ENCODE measurements at regions of chr11 and their contacts with region 1.

Region 1: GRCh38 chr11:34313099-34313517 is 44.7 kb downstream of the ABTB2 start:
- DNase-seq: no peak
- H3K4me3 ChIP-seq: no peak overlapping the region
- H3K27ac ChIP-seq: no peak overlapping the region
- H3K4me1 ChIP-seq: no peaks in the 10 kb centered on the region
- H3K27me3 ChIP-seq: no peaks in the 10 kb centered on the region
- CTCF ChIP-seq: no peak
- POLR2A ChIP-seq: no peak

Region 2: DNA sequence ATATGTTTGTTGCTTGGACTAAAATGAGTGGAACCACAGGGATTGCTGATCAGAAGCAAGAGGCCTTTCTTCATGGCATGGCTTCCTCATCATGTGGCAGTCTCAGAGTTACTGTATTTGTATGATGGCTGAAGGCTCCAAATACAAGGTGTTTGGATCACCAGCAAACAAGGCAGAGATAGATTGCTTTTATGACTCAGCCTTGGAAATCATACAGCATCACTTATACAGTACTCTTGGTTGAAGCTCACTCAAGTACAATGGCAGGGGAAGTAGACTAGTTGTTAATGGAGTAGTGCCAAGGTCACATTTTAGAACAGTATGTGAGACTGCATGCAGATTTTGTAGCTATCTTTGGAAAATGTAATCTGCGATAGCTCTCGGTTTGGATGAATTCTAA is 245.0 kb before region 1 on chr11:
- intact Hi-C with region 1: no loop called
- DNase-seq: no peak
- H3K4me3 ChIP-seq: no peak overlapping the region
- H3K27ac ChIP-seq: no peak overlapping the region
- H3K4me1 ChIP-seq: peaks cover 6% of the 10 kb centered on the region
- H3K27me3 ChIP-seq: no peaks in the 10 kb centered on the region
- CTCF ChIP-seq: no peak
- POLR2A ChIP-seq: no peak

Region 3: DNA sequence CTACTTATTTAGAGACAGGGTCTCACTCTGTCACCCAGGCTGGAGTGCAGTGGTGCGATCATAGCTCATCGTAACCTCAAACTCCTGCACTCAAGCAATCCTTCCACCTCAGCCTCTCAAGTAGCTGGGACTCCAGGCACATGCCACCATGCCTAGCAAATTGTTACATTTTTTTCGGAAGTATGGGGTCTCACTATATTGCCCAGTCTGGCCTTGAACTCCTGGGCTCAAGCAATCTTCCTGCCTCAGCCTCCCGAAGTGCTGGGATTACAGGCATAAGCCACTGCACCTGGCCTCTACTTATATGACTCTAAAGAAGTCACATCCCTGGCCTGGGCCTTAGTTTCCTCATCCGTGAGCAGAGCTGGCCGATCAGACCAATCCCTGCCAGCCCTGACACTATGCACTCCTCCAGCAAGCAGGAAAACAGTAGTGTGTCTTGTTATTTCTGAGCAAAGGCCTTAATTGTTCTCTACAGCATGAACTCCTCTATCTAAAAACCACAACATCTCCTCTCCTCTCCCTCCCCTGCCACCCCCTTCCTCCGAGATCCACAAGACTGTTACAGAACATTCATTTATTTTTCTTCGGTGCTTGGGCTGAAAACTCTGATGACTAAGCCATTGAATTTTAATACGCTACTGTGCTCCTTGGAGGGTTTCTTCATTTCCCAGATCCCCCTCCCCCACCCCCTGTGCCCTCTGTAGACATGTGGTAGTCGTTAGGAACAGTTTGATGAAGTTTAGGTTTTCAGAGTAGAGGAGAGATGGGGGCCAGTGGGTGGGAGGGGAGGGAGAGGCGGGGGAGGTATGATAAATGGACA is 46.8 kb before region 1 on chr11:
- intact Hi-C with region 1: loop called (anchors 5 kb)
- DNase-seq: no peak
- H3K4me3 ChIP-seq: no peak overlapping the region
- H3K27ac ChIP-seq: no peak overlapping the region
- H3K4me1 ChIP-seq: no peaks in the 10 kb centered on the region
- H3K27me3 ChIP-seq: no peaks in the 10 kb centered on the region
- CTCF ChIP-seq: no peak
- POLR2A ChIP-seq: no peak

Region 4: DNA sequence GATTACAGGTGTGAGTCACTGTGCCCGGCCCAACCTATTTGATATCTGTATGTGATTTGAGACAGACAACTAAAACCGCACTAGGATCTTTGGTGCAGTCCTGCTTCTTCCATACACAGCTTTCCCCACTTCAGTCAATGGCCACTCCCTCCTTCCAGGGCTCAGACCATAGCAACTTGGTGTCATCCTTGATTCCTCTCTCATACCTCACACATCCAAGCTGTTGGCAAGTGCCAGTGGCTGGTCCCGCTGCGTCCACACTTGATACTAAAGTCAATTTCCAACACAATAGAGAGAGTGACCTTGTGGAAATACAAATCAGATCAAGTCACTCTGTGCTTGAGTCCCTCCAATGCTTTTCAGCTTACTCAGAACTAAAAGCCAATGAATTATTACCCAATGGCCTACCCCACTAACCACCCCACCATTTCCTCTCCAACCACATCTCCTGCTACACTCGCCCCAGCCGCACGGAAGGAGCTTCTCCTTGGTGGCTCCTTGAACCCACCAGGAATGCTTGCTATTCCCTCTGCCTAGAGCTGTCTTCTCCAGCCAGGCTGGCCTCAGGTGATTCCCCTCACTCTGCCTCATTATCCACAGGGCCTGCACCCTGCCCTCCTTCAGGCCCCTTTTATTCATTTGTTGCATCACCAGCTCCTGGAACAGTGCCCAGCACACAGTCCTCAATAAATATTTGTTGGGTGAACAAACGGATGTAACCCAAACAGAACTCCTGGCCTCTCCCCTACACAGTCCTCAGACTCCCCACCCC is 31.8 kb after region 1 on chr11:
- intact Hi-C with region 1: loop called (anchors 5 kb)
- DNase-seq: peak; percentile 36
- H3K4me3 ChIP-seq: no peak overlapping the region
- H3K27ac ChIP-seq: peak overlapping the region in 1 of 2 donors; percentile 14
- H3K4me1 ChIP-seq: no peaks in the 10 kb centered on the region
- H3K27me3 ChIP-seq: no peaks in the 10 kb centered on the region
- CTCF ChIP-seq: no peak
- POLR2A ChIP-seq: no peak

Region 5: GRCh38 chr11:34417202-34417601 is 104.1 kb after region 1 on chr11:
- intact Hi-C with region 1: no loop called
- DNase-seq: no peak
- H3K4me3 ChIP-seq: no peak overlapping the region
- H3K27ac ChIP-seq: no peak overlapping the region
- H3K4me1 ChIP-seq: peaks cover 3% of the 10 kb centered on the region
- H3K27me3 ChIP-seq: no peaks in the 10 kb centered on the region
- CTCF ChIP-seq: no peak
- POLR2A ChIP-seq: no peak